Activated CD8-positive, alpha-beta T cell treated with anti-CD3 and anti-CD28 coated beads, Interleukin-2, amount 10 ng/mL, durations not matched to agents 7 days and 5 days (primary cell): ENCODE measurements at regions of chr12 and their contacts with region 1.

Region 1: GRCh38 chr12:68158432-68158831 is 1.1 kb downstream of the IFNG start:
- DNase-seq: peak; percentile 55
- ATAC-seq: peak; percentile 34
- H3K4me3 Mint-ChIP-seq: peak overlapping the region; percentile 60
- H3K27ac Mint-ChIP-seq: peak overlapping the region; percentile 28
- H3K4me1 Mint-ChIP-seq: peaks cover 44% of the 10 kb centered on the region
- H3K27me3 Mint-ChIP-seq: no peaks in the 10 kb centered on the region

Region 2: DNA sequence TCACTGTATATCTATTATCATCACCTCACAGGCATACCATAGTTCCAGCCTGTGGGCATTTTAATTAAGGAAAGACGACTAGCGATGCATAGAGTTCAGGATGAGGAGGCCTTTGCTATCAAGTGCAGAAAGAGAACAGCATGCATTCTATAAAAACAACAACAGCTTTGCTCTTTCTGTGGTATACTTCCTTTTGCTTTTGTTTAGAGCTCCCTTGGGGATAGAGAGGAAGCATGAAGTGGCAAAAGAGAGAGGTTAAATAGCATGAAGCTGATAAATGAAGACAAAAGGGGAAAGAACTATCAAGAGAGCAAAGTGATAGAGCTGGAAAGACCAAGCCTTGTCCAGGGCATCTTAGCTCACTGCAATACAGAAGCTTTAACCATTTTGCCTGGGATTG is 145.7 kb before region 1 on chr12:
- CTCF ChIA-PET with region 1: interaction called, 10 read pairs
- POLR2A ChIA-PET with region 1: no interaction called
- DNase-seq: no peak
- ATAC-seq: no peak
- H3K4me3 Mint-ChIP-seq: no peak overlapping the region
- H3K27ac Mint-ChIP-seq: no peak overlapping the region
- H3K4me1 Mint-ChIP-seq: peaks cover 11% of the 10 kb centered on the region
- H3K27me3 Mint-ChIP-seq: no peaks in the 10 kb centered on the region

Region 3: GRCh38 chr12:68048648-68049297 is 109.7 kb before region 1 on chr12:
- CTCF ChIA-PET with region 1: interaction called, 223 read pairs
- POLR2A ChIA-PET with region 1: no interaction called
- DNase-seq: no peak
- ATAC-seq: no peak
- H3K4me3 Mint-ChIP-seq: no peak overlapping the region
- H3K27ac Mint-ChIP-seq: no peak overlapping the region
- H3K4me1 Mint-ChIP-seq: no peaks in the 10 kb centered on the region
- H3K27me3 Mint-ChIP-seq: peaks cover 4% of the 10 kb centered on the region

Region 4: DNA sequence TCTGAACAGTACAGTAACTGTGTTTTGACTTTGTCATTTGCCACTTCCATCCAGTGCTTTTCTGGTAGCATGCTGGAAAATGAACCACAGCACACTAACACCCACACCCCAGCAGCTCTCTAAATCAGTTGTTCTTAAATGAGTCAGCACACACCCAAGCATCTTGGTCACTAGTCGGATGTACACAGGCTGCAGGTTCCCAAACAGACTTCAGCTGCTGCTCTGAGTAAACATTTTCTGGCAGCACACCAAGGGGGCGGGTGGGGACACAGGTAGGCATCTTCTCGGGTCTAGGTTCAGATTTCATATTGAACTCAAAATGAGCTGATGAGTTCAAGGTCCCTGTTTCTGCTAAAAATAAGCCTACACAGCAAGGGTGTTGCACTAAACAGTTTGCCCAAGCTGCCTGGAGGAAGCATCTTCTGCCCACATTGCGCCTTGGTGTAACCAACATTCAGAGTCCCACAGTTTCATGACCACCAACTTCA is 38.7 kb before region 1 on chr12:
- CTCF ChIA-PET with region 1: interaction called, 134 read pairs
- POLR2A ChIA-PET with region 1: interaction called, 4 read pairs
- DNase-seq: peak; percentile 74
- ATAC-seq: peak; percentile 92
- H3K4me3 Mint-ChIP-seq: peak overlapping the region; percentile 9
- H3K27ac Mint-ChIP-seq: peak overlapping the region; percentile 74
- H3K4me1 Mint-ChIP-seq: peaks cover 30% of the 10 kb centered on the region
- H3K27me3 Mint-ChIP-seq: no peaks in the 10 kb centered on the region

Region 5: GRCh38 chr12:68148258-68148951 is 10.0 kb before region 1 on chr12:
- CTCF ChIA-PET with region 1: interaction called, 42 read pairs
- POLR2A ChIA-PET with region 1: no interaction called
- DNase-seq: no peak
- ATAC-seq: no peak
- H3K4me3 Mint-ChIP-seq: no peak overlapping the region
- H3K27ac Mint-ChIP-seq: no peak overlapping the region
- H3K4me1 Mint-ChIP-seq: peaks cover 8% of the 10 kb centered on the region
- H3K27me3 Mint-ChIP-seq: no peaks in the 10 kb centered on the region

Region 6: GRCh38 chr12:68223083-68223747 is 64.8 kb after region 1 on chr12:
- CTCF ChIA-PET with region 1: interaction called, 25 read pairs
- POLR2A ChIA-PET with region 1: no interaction called
- DNase-seq: peak; percentile 83
- ATAC-seq: peak; percentile 98
- H3K4me3 Mint-ChIP-seq: no peak overlapping the region
- H3K27ac Mint-ChIP-seq: no peak overlapping the region
- H3K4me1 Mint-ChIP-seq: peaks cover 18% of the 10 kb centered on the region
- H3K27me3 Mint-ChIP-seq: peaks cover 13% of the 10 kb centered on the region